CD14-positive monocyte (primary cell): ENCODE measurements at regions of chr7 and their contacts with region 1.

Region 1: GRCh38 chr7:56074371-56074791 is 10.3 kb downstream of the SUMF2 start:
- DNase-seq: peak; percentile 66 to 73 (median 73)
- H3K4me3 ChIP-seq: no peak overlapping the region
- H3K4me3 Mint-ChIP-seq: no peak overlapping the region
- H3K27ac ChIP-seq: peak overlapping the region in 1 of 2 donors; percentile 36
- H3K27ac Mint-ChIP-seq: peak overlapping the region in 3 of 7 donors; percentile 17 to 78 (median 66)
- H3K4me1 ChIP-seq: no peaks in the 10 kb centered on the region
- H3K4me1 Mint-ChIP-seq: peaks cover 2% of the 10 kb centered on the region
- H3K27me3 ChIP-seq: no peaks in the 10 kb centered on the region
- H3K27me3 Mint-ChIP-seq: no peaks in the 10 kb centered on the region
- CTCF ChIP-seq: peak; percentile 89

Region 2: DNA sequence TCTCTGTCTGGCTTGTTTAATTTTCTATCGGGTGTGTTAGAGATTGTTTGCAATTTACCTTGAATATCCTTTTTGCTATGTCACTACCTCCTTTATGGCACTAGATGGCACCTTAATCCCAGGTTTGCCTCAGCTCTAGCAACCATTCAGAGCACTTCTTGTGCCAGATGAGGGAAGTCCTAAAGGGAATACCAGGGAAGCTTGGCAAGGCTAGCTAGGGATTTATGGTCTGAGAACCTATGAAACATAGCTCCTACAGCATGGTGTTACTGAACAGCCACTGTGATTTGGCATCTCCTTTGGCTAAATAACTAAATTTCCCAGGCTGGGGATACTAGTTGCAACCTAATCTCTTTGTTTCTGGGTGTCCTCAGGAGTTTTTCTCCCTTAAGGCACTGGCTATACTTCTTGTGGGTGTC is 433.1 kb before region 1 on chr7:
- intact Hi-C with region 1: loop called in 1 of 2 experiments (anchors 10 kb)
- DNase-seq: peak; percentile 4 to 34 (median 29)
- H3K4me3 ChIP-seq: no peak overlapping the region
- H3K4me3 Mint-ChIP-seq: no peak overlapping the region
- H3K27ac ChIP-seq: no peak overlapping the region
- H3K27ac Mint-ChIP-seq: no peak overlapping the region
- H3K4me1 ChIP-seq: no peaks in the 10 kb centered on the region
- H3K4me1 Mint-ChIP-seq: no peaks in the 10 kb centered on the region
- H3K27me3 ChIP-seq: no peaks in the 10 kb centered on the region
- H3K27me3 Mint-ChIP-seq: peaks cover 3 to 4% (median 4%) of the 10 kb centered on the region in 3 donors
- CTCF ChIP-seq: peak; percentile 63

Region 3: DNA sequence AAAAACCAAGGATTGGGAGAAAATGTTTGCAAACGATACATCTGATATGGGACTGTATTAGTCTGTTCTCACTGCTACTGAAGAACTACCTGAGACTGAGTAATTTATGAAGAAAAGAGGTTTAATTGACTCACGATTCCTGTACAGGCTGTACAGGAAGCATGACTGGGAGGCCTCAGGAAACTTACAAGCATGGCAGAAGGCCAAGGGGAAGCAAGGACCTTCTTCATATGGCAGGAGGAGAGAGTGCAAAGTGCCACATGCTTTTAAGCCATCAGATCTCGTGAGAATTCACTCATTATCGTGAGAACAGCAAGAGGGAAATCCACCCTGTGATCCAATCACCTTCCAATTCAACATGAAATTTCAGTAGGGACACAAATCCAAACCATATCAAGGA is 176.1 kb before region 1 on chr7:
- intact Hi-C with region 1: loop called in 1 of 2 experiments (anchors 10 kb)
- DNase-seq: no peak
- H3K4me3 ChIP-seq: no peak overlapping the region
- H3K4me3 Mint-ChIP-seq: no peak overlapping the region
- H3K27ac ChIP-seq: no peak overlapping the region
- H3K27ac Mint-ChIP-seq: no peak overlapping the region
- H3K4me1 ChIP-seq: no peaks in the 10 kb centered on the region
- H3K4me1 Mint-ChIP-seq: no peaks in the 10 kb centered on the region
- H3K27me3 ChIP-seq: no peaks in the 10 kb centered on the region
- H3K27me3 Mint-ChIP-seq: peaks cover 0 to 2% (median 2%) of the 10 kb centered on the region in 3 donors
- CTCF ChIP-seq: no peak

Region 4: GRCh38 chr7:55912748-55913158 is 161.6 kb before region 1 on chr7:
- intact Hi-C with region 1: no loop called
- DNase-seq: no peak
- H3K4me3 ChIP-seq: no peak overlapping the region
- H3K4me3 Mint-ChIP-seq: no peak overlapping the region
- H3K27ac ChIP-seq: no peak overlapping the region
- H3K27ac Mint-ChIP-seq: no peak overlapping the region
- H3K4me1 ChIP-seq: no peaks in the 10 kb centered on the region
- H3K4me1 Mint-ChIP-seq: no peaks in the 10 kb centered on the region
- H3K27me3 ChIP-seq: no peaks in the 10 kb centered on the region
- H3K27me3 Mint-ChIP-seq: no peaks in the 10 kb centered on the region
- CTCF ChIP-seq: no peak

Region 5: GRCh38 chr7:56003749-56004148 is 70.6 kb before region 1 on chr7:
- intact Hi-C with region 1: loop called (anchors 2 kb)
- DNase-seq: no peak
- H3K4me3 ChIP-seq: no peak overlapping the region
- H3K4me3 Mint-ChIP-seq: no peak overlapping the region
- H3K27ac ChIP-seq: no peak overlapping the region
- H3K27ac Mint-ChIP-seq: peak overlapping the region in 1 of 7 donors; percentile 30
- H3K4me1 ChIP-seq: peaks cover 8 to 13% of the 10 kb centered on the region in 2 donors
- H3K4me1 Mint-ChIP-seq: peaks cover 10% of the 10 kb centered on the region
- H3K27me3 ChIP-seq: no peaks in the 10 kb centered on the region
- H3K27me3 Mint-ChIP-seq: peaks cover 0 to 3% (median 0%) of the 10 kb centered on the region in 3 donors
- CTCF ChIP-seq: no peak

Region 6: GRCh38 chr7:56033671-56034432 is 40.5 kb before region 1 on chr7:
- intact Hi-C with region 1: no loop called
- DNase-seq: peak; percentile 48 to 65 (median 61)
- H3K4me3 ChIP-seq: peak overlapping the region; percentile 66 to 99 (median 80)
- H3K4me3 Mint-ChIP-seq: peak overlapping the region; percentile 82 to 97
- H3K27ac ChIP-seq: peak overlapping the region; percentile 66 to 72
- H3K27ac Mint-ChIP-seq: peak overlapping the region; percentile 75 to 93 (median 85)
- H3K4me1 ChIP-seq: peaks cover 0 to 5% of the 10 kb centered on the region in 2 donors
- H3K4me1 Mint-ChIP-seq: peaks cover 14% of the 10 kb centered on the region
- H3K27me3 ChIP-seq: no peaks in the 10 kb centered on the region
- H3K27me3 Mint-ChIP-seq: peaks cover 0 to 2% (median 1%) of the 10 kb centered on the region in 3 donors
- CTCF ChIP-seq: peak; percentile 16

Region 7: GRCh38 chr7:56106108-56107073 is 32.0 kb after region 1 on chr7 and contains the start of gene CHCHD2:
- intact Hi-C with region 1: no loop called
- DNase-seq: peak; percentile 98 to 99 (median 99)
- H3K4me3 ChIP-seq: peak within 1 kb of the TSS; percentile 62 to 97 (median 89)
- H3K4me3 Mint-ChIP-seq: peak within 1 kb of the TSS; percentile 95 to 99
- H3K27ac ChIP-seq: peak within 1 kb of the TSS; percentile 93 to 97
- H3K27ac Mint-ChIP-seq: peak within 1 kb of the TSS; percentile 96 to 99 (median 98)
- H3K4me1 ChIP-seq: peaks cover 22 to 24% of the 10 kb centered on the region in 2 donors
- H3K4me1 Mint-ChIP-seq: peaks cover 25% of the 10 kb centered on the region
- H3K27me3 ChIP-seq: no peaks in the 10 kb centered on the region
- H3K27me3 Mint-ChIP-seq: peaks cover 0 to 9% (median 2%) of the 10 kb centered on the region in 3 donors
- CTCF ChIP-seq: no peak
- polyA plus RNA-seq, gene CHCHD2: 241 to 500 (median 412) TPM

Region 8: GRCh38 chr7:56157238-56157790 is 82.9 kb after region 1 on chr7:
- intact Hi-C with region 1: no loop called
- DNase-seq: no peak
- H3K4me3 ChIP-seq: no peak overlapping the region
- H3K4me3 Mint-ChIP-seq: no peak overlapping the region
- H3K27ac ChIP-seq: no peak overlapping the region
- H3K27ac Mint-ChIP-seq: no peak overlapping the region
- H3K4me1 ChIP-seq: no peaks in the 10 kb centered on the region
- H3K4me1 Mint-ChIP-seq: no peaks in the 10 kb centered on the region
- H3K27me3 ChIP-seq: no peaks in the 10 kb centered on the region
- H3K27me3 Mint-ChIP-seq: no peaks in the 10 kb centered on the region
- CTCF ChIP-seq: no peak